Right cardiac atrium (tissue), 5 donors: ENCODE measurements at regions of chr7 and their contacts with region 1.

Region 1: GRCh38 chr7:82572195-82572880 is 128.8 kb upstream of the CACNA2D1 start:
- DNase-seq: peak; percentile 87 to 93 (median 90)
- ATAC-seq: peak; percentile 91
- H3K4me3 ChIP-seq: no peak overlapping the region
- H3K27ac ChIP-seq: no peak overlapping the region
- H3K4me1 ChIP-seq: no peaks in the 10 kb centered on the region
- H3K27me3 ChIP-seq: no peaks in the 10 kb centered on the region

Region 2: DNA sequence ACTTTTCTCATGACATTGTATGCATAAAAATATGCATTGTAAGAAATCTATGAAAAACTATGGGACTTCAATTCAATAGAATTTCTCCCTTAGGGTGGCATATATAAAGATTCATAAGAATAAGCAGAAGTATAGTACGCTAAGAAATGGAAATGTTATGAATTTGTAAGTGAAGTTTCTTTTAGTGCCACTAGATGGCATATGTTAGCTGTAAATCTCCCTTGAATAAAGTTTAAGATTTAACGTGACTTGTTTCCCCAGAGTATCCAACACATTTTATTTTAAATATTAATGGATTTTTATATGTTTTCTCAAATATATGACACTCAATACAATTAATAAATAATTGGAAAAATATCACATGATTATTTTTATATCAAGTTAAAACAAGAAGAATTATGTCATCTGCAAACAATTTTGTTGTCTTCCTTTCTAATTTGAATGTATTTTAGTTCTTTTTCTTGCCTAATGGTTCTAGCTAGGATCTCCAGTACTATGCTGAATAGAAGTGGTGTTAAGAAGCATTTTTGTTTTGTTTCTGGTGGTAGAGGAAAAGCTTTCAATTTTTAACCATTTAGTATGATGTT is 1089.6 kb before region 1 on chr7:
- intact Hi-C with region 1: loop called in 1 of 4 experiments (anchors 10 kb)
- DNase-seq: no peak
- ATAC-seq: no peak
- H3K4me3 ChIP-seq: no peak overlapping the region
- H3K27ac ChIP-seq: no peak overlapping the region
- H3K4me1 ChIP-seq: peaks cover 5% of the 10 kb centered on the region
- H3K27me3 ChIP-seq: no peaks in the 10 kb centered on the region

Region 3: DNA sequence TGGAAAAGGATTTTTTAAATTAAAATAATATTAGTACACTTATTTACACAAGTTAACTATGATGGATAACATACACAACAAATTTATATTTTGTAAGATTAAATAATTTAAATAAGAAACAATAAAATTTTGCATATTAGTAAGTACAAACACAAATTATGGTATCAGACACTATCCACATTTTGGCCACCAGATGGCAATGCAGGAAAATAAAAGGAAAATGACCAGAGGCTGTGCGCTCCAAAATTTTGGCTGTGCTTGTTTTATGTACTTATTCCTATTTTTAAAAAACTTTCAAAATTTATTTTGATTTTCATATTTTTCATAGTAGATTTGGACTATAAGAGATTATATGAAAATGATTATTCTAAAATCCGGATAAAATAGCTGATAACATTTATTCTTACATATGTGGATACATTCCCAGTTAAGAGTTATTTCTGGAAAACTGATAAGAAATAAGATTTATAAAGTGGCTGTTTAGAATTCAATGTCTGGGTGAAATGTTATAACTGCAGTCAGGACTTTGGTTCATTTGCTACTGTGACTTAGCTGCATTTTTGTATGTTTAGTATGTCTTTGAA is 527.7 kb before region 1 on chr7:
- intact Hi-C with region 1: loop called (anchors 5 kb)
- DNase-seq: peak; percentile 10 to 51 (median 14)
- ATAC-seq: peak; percentile 24 to 41
- H3K4me3 ChIP-seq: no peak overlapping the region
- H3K27ac ChIP-seq: no peak overlapping the region
- H3K4me1 ChIP-seq: no peaks in the 10 kb centered on the region
- H3K27me3 ChIP-seq: no peaks in the 10 kb centered on the region

Region 4: GRCh38 chr7:82234457-82235049 is 337.8 kb before region 1 on chr7:
- intact Hi-C with region 1: loop called in 2 of 4 experiments (anchors 5 to 10 kb)
- DNase-seq: no peak
- ATAC-seq: no peak
- H3K4me3 ChIP-seq: no peak overlapping the region
- H3K27ac ChIP-seq: no peak overlapping the region
- H3K4me1 ChIP-seq: no peaks in the 10 kb centered on the region
- H3K27me3 ChIP-seq: no peaks in the 10 kb centered on the region